ENCODE measurements at regions of chr7 and their contacts with region 1.

Region 1: DNA sequence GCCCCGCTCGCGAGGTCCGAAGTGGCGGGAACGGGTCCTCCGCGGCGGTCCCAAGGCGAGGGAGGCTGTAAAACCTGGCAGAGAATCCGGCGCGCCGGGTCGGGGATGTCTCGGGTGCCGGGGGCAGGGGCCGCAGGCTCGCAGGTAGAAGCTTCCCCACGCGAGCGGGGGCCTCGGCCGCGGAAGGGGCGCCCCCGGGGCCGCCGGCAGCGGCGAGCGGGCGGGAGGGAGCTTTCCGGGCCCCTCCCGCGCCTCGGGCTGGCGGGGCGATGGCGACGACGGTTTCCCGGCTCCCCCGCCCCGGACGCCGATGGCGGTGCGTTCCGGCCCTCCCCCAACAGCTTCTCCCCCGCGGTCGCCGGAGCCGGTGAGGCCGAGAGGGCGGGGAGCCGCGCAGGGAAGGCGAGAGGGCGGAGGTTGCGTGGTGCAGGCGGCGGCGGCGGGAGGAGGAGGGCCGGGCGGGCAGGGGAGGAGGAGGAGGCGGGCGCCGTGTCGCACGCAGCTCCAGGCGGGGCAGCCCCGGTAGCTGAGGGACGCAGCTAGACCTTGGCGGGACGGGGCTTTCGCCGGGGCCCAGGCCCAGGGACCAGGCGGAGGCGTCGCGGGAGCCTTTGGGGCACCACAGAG is at the start of gene CUL1:
- DNase-seq: peak; percentile 95
- H3K4me3 Mint-ChIP-seq: peak within 1 kb of the TSS; percentile 92
- H3K27ac Mint-ChIP-seq: peak within 1 kb of the TSS; percentile 94
- H3K4me1 Mint-ChIP-seq: peaks cover 54% of the 10 kb centered on the region
- H3K27me3 Mint-ChIP-seq: no peaks in the 10 kb centered on the region
- total RNA-seq, gene CUL1: 82.2 and 82.4 TPM in 2 replicates

Region 2: DNA sequence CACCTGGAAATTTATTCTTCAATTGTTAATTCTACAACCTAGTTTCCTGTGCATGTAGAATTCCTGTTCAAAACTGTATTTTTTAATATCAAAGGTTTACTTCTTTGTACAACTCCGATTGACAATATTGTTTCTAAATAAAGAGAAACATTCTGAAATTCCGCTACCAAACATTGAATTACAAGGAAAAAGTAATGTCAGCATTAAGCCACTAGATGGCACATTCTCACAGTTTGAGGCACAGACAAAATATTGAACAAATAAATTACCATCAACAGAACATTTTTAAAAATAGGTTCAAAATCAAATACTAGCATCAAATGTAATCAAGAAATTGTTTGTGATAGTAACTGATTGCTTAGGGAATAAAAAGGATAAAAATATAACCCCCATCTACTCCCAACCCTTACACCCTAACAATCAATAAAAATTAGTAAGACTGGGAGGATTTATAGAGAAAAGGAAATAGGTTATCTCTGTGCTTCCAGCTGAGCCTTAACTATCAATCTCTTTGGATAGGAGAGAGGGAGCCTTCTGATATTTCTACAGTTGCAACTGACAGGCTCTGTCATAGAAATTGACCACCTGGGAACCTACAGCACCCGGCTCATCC is 194.5 kb before region 1 on chr7:
- intact Hi-C with region 1: loop called (anchors 2 kb)
- DNase-seq: peak; percentile 64
- H3K4me3 Mint-ChIP-seq: no peak overlapping the region
- H3K27ac Mint-ChIP-seq: no peak overlapping the region
- H3K4me1 Mint-ChIP-seq: peaks cover 8% of the 10 kb centered on the region
- H3K27me3 Mint-ChIP-seq: peaks cover 21% of the 10 kb centered on the region

Region 3: DNA sequence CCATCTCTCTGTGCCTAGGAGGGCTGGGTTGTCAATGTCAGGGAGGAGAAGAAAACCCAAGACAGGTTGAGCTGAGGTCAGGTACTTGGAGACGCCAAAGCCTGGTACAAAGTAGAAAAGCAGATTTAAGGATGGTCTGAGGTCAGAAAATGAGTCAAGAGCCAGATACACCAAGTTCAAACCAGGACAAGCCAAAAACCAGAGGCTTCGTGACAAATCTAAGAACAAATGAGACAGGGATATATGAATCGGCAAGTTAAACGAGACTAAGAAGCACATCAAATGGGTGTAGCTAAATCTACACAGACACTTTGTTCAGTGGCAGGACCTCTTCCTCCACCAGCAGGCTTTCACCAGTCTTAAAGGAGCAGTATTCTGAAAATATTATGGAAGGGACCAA is 73.8 kb before region 1 on chr7:
- intact Hi-C with region 1: loop called (anchors 2 kb)
- DNase-seq: no peak
- H3K4me3 Mint-ChIP-seq: no peak overlapping the region
- H3K27ac Mint-ChIP-seq: no peak overlapping the region
- H3K4me1 Mint-ChIP-seq: peaks cover 31% of the 10 kb centered on the region
- H3K27me3 Mint-ChIP-seq: peaks cover 9% of the 10 kb centered on the region

Region 4: GRCh38 chr7:148884299-148885022 is 186.0 kb after region 1 on chr7:
- intact Hi-C with region 1: loop called (anchors 1 kb)
- DNase-seq: peak; percentile 99
- H3K4me3 Mint-ChIP-seq: peak overlapping the region; percentile 93
- H3K27ac Mint-ChIP-seq: peak overlapping the region; percentile 99
- H3K4me1 Mint-ChIP-seq: peaks cover 26% of the 10 kb centered on the region
- H3K27me3 Mint-ChIP-seq: no peaks in the 10 kb centered on the region

Region 5: GRCh38 chr7:148962823-148963582 is 264.5 kb after region 1 on chr7:
- intact Hi-C with region 1: loop called (anchors 2 kb)
- DNase-seq: peak; percentile 89
- H3K4me3 Mint-ChIP-seq: peak overlapping the region; percentile 96
- H3K27ac Mint-ChIP-seq: peak overlapping the region; percentile 89
- H3K4me1 Mint-ChIP-seq: peaks cover 24% of the 10 kb centered on the region
- H3K27me3 Mint-ChIP-seq: no peaks in the 10 kb centered on the region

Region 6: DNA sequence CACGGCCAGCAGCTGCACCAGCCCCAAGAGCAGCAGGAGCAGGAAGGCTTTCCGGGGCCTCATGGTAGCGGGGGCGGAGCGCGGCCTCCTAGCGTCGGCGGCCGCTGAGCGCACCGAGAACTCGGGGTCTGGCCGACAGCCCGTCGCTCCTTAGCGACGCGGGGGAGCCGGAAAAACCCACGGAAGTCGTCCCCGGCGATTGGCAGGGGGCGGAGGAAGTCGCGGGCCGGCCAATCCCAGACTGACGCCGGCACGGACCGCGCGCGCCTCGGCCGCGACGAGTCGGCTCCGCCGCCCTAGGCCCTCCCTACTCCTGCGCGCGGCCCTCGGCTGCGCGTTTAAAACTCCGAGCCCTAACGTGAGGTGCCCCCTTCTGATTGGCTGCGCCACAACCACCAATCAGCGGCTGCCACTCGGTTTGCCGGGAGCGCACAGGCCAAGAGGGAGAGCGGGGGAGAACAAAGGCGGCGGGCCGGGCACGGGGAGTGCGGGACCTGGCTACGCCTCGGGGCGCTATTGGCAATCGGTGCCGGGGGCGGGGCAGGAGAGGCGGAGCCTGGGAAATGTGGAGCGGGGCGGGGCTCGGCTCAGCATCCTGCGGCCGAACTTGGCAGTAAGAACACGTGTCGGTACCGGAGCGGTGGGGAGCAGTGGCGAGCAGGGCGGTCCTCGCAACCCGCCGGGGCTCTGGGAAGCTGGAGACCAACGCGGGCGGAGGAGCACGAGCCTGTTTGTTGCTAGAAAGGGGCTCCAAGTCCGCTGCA is 330.0 kb after region 1 on chr7 and contains the start of gene PDIA4:
- intact Hi-C with region 1: loop called (anchors 1 kb)
- DNase-seq: peak; percentile 100
- H3K4me3 Mint-ChIP-seq: peak within 1 kb of the TSS; percentile 99
- H3K27ac Mint-ChIP-seq: peak within 1 kb of the TSS; percentile 95
- H3K4me1 Mint-ChIP-seq: peaks cover 33% of the 10 kb centered on the region
- H3K27me3 Mint-ChIP-seq: peaks cover 6% of the 10 kb centered on the region
- total RNA-seq, gene PDIA4: 137 and 138 TPM in 2 replicates